Aorta (tissue), 5 donors: ENCODE measurements at regions of chr22 and their contacts with region 1.

Region 1: GRCh38 chr22:37643225-37643847 is 3.9 kb downstream of the SH3BP1 start:
- DNase-seq: peak; percentile 90 to 96
- ATAC-seq: peak; percentile 88
- H3K4me3 ChIP-seq: no peak overlapping the region
- H3K27ac ChIP-seq: no peak overlapping the region
- H3K4me1 ChIP-seq: no peaks in the 10 kb centered on the region
- H3K27me3 ChIP-seq: no peaks in the 10 kb centered on the region

Region 2: GRCh38 chr22:37686002-37686982 is 43.0 kb after region 1 on chr22 and contains the start of gene NOL12:
- intact Hi-C with region 1: loop called (anchors 1 to 2 kb)
- DNase-seq: peak; percentile 88 to 93
- ATAC-seq: peak; percentile 94
- H3K4me3 ChIP-seq: peak within 1 kb of the TSS; percentile 55 to 58
- H3K27ac ChIP-seq: peak within 1 kb of the TSS in 1 of 2 donors; percentile 46
- H3K4me1 ChIP-seq: no peaks in the 10 kb centered on the region
- H3K27me3 ChIP-seq: no peaks in the 10 kb centered on the region
- total RNA-seq, gene NOL12: 11.1 to 15.4 TPM

Region 3: GRCh38 chr22:37696657-37697537 is 53.6 kb after region 1 on chr22 and contains the start of gene TRIOBP:
- intact Hi-C with region 1: no loop called
- DNase-seq: peak; percentile 98
- ATAC-seq: peak; percentile 95
- H3K4me3 ChIP-seq: no peak within 1 kb of the TSS
- H3K27ac ChIP-seq: peak within 1 kb of the TSS in 1 of 2 donors; percentile 13
- H3K4me1 ChIP-seq: no peaks in the 10 kb centered on the region
- H3K27me3 ChIP-seq: no peaks in the 10 kb centered on the region
- total RNA-seq, gene TRIOBP: 86.0 to 113 TPM

Region 4: DNA sequence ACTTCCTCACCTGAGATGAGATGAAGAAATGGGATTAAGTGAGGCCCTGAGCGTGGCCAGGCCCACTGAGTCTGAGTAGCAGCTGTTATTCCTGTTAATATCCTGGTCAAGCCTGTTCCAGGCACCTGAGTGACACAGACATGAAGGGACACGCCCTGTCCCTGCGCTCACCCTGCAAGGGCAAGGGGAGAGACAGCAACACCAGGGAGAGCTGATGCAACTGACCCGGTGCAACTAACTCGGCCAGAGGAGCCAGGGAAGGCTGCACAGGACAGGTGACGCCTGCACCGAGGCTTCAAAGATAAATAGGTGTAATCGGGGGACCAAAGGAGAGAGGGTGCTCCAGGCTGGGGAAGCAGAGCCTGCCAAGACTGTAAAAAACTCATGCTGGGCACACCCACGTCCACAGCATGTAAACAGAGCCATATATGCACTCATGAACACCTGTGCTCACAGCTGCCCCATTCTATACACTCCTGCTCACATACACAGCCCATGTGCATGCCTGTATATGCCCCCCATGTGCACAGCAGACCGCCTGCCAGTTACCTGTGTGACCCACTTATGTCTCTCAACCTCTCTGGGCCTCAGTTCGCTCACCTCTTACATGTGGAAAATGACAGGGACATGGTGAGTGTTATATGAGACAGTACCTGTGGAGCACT is 141.6 kb after region 1 on chr22:
- intact Hi-C with region 1: loop called (anchors 2 kb)
- DNase-seq: no peak
- ATAC-seq: no peak
- H3K4me3 ChIP-seq: no peak overlapping the region
- H3K27ac ChIP-seq: no peak overlapping the region
- H3K4me1 ChIP-seq: no peaks in the 10 kb centered on the region
- H3K27me3 ChIP-seq: no peaks in the 10 kb centered on the region

Region 5: DNA sequence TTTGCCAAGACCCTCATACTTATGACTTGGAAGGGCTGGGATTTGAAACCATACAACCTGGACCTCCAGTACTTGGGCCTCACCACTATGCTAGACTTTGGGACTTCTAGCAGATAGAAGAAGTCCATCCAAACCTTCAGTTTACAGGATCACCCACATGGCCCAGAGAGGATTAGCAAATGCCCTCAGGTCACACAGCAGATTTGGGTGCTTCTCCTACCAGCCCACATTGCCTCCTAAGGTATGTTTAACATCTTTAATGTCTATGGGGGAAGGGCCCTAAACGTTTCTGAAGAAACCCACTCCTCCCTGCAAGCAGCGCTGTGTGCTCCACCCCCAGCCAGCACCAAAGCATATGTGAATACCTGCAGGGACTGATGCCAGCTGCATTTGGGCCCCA is 146.9 kb after region 1 on chr22:
- intact Hi-C with region 1: loop called (anchors 2 kb)
- DNase-seq: no peak
- ATAC-seq: no peak
- H3K4me3 ChIP-seq: no peak overlapping the region
- H3K27ac ChIP-seq: no peak overlapping the region
- H3K4me1 ChIP-seq: no peaks in the 10 kb centered on the region
- H3K27me3 ChIP-seq: no peaks in the 10 kb centered on the region